Panc1 (cell line): ENCODE measurements at regions of chr1 and their contacts with region 1.

Region 1: GRCh38 chr1:45011837-45012638 is at the start of gene UROD:
- DNase-seq: peak; percentile 94
- ATAC-seq: peak; percentile 84
- H3K4me3 ChIP-seq: peak within 1 kb of the TSS; percentile 89 to 94
- H3K27ac ChIP-seq: peak within 1 kb of the TSS; percentile 80
- H3K4me1 ChIP-seq: peaks cover 17% of the 10 kb centered on the region
- H3K27me3 ChIP-seq: no peaks in the 10 kb centered on the region
- CTCF ChIP-seq: no peak
- total RNA-seq, gene UROD: 76.8 TPM

Region 2: DNA sequence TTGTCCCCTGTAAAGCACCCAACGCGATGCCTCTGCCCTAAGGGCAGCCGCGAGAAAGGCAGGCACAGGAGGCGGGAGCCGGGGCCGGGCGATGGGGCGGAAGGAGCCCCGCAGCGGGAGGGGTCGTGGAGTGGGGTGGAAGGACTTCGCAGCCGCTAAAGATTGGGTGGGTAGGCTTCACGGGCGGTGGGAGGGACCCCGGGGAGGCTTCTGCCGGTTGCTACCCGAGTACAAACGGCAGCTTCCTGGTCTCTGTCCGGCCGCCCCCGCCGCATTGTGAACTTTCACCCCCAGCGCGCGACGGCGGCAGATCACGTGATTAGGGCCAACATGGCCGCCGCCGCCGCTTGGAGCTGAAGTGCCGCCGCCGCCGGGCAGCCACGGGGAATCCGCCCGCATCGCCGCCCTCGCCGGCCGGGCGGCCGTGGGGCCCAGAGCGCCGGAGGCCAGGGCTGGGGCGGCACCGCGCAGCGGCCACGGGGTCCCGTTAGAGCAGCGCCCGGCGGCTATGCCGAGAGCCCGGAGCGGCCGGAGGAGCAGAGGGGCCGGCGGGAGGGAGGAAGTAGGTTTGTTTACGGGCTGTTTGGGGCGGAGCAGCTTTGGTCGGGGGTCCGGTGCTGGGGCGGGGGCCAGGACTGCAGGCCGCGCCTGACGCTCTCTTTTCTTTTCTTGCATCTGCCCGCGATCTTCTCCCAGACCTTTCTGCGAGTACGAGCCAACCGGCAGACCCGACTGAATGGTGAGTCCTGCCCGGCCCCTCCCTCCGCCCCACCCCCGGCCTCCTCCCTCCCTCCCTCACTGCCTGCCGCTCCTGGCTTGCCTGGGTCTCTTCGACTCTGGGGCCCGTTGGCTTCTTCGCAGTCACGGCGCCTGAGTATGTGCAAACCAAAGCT is 380.1 kb before region 1 on chr1:
- CTCF ChIA-PET with region 1: no interaction called
- POLR2A ChIA-PET with region 1: no interaction called
- in situ Hi-C with region 1: no loop called
- intact Hi-C with region 1: no loop called
- DNase-seq: no peak
- ATAC-seq: peak; percentile 89
- H3K4me3 ChIP-seq: peak overlapping the region; percentile 48 to 88
- H3K27ac ChIP-seq: peak overlapping the region; percentile 96
- H3K4me1 ChIP-seq: peaks cover 6% of the 10 kb centered on the region
- H3K27me3 ChIP-seq: no peaks in the 10 kb centered on the region
- CTCF ChIP-seq: no peak

Region 3: DNA sequence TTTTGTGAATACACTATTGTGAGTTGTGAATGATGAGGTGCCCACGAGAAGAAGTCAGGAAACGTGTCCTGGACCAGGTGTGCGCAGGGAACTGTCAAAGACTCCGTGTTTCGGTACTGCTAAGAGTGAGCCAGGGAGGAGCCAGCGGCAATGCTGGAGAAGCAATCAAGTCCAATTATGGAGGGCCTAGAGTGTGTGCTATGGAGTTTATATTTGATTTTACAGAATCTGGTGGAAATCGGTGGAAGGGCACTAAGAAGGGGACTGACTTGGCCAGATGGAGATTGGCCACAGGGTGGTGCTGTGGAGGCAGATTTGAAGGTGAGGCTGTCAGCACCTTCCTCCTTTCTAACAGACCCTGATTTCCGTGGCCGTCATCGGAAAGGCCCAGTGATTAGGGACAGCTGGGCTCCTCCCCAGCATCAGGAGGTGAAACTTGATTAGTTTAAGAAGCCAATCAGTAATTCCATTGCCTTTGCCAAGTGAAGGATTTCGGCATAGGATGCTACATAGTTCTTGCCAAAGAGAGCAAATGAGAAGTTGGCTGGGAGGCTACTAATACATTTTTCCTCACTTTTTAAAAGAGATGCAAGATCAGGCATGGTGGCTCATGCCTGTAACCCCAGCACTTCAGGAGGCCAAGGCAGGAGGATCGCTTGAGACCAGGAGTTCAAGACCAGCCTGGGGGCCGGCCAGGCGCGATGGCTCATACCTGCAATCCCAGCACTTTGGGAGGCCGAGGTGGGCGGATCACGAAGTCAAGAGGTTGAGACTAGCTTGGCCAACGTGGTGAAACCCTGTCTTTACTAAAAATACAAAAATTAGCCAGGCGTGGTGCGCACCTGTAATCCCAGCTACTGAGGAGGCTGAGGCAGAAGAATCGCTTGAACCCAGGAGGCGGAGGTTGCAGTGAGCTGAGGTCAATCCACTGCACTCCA is 176.0 kb before region 1 on chr1:
- CTCF ChIA-PET with region 1: no interaction called
- POLR2A ChIA-PET with region 1: no interaction called
- in situ Hi-C with region 1: no loop called
- intact Hi-C with region 1: loop called (anchors 5 kb)
- DNase-seq: peak; percentile 77
- ATAC-seq: peak; percentile 91
- H3K4me3 ChIP-seq: peak overlapping the region in 1 of 2 experiments; percentile 25; a peak in 1 of 4 replicates
- H3K27ac ChIP-seq: no peak overlapping the region
- H3K4me1 ChIP-seq: no peaks in the 10 kb centered on the region
- H3K27me3 ChIP-seq: no peaks in the 10 kb centered on the region
- CTCF ChIP-seq: peak; percentile 93

Region 4: DNA sequence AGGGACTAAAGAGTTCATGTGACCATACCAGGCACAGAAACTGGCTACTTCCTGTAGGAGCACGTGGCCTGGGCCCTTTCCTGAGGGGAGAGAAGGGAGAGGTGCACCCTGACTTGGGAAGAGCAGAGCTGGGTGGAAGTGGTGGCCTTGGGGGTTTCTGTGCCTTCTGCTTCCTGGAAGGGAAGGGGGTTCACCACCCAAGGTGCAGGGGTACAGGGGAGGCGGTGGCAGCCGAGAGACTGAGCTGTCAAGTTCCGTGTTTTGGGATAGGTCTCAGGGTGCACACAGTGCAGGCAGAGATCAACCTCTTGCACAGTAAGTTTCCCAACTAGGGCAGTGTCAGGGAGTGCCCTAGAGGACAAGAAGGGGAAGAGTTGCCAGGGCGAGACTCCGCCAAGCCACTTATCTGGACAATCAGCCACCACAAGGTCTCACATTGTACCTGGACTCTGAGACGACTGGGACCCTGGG is 11.0 kb before region 1 on chr1:
- CTCF ChIA-PET with region 1: interaction called, 15 read pairs
- POLR2A ChIA-PET with region 1: no interaction called
- in situ Hi-C with region 1: no loop called
- intact Hi-C with region 1: no loop called
- DNase-seq: no peak
- ATAC-seq: peak; percentile 73
- H3K4me3 ChIP-seq: no peak overlapping the region
- H3K27ac ChIP-seq: no peak overlapping the region
- H3K4me1 ChIP-seq: no peaks in the 10 kb centered on the region
- H3K27me3 ChIP-seq: no peaks in the 10 kb centered on the region
- CTCF ChIP-seq: no peak

Region 5: GRCh38 chr1:45303582-45304310 is 291.7 kb after region 1 on chr1:
- CTCF ChIA-PET with region 1: interaction called, 9 read pairs
- POLR2A ChIA-PET with region 1: interaction called, 3 read pairs
- in situ Hi-C with region 1: no loop called
- intact Hi-C with region 1: loop called (anchors 1 kb)
- DNase-seq: peak; percentile 75
- ATAC-seq: peak; percentile 97
- H3K4me3 ChIP-seq: peak overlapping the region; percentile 65 to 80
- H3K27ac ChIP-seq: peak overlapping the region; percentile 91
- H3K4me1 ChIP-seq: peaks cover 8% of the 10 kb centered on the region
- H3K27me3 ChIP-seq: no peaks in the 10 kb centered on the region
- CTCF ChIP-seq: peak; percentile 93

Region 6: GRCh38 chr1:45512641-45513054 is 500.6 kb after region 1 on chr1:
- CTCF ChIA-PET with region 1: interaction called, 11 read pairs
- POLR2A ChIA-PET with region 1: no interaction called
- in situ Hi-C with region 1: no loop called
- intact Hi-C with region 1: no loop called
- DNase-seq: peak; percentile 64
- ATAC-seq: peak; percentile 75
- H3K4me3 ChIP-seq: no peak overlapping the region
- H3K27ac ChIP-seq: no peak overlapping the region
- H3K4me1 ChIP-seq: no peaks in the 10 kb centered on the region; the same call in 1 of the 2 replicates
- H3K27me3 ChIP-seq: no peaks in the 10 kb centered on the region
- CTCF ChIP-seq: peak; percentile 84